Naive thymus-derived CD8-positive, alpha-beta T cell (primary cell): ENCODE measurements at regions of chr6 and their contacts with region 1.

Region 1: GRCh38 chr6:139375232-139376016 is 976 bp upstream of the CITED2 start:
- DNase-seq: peak in 9 of 10 donors; percentile 69 to 92 (median 83)
- ATAC-seq: peak; percentile 62 to 73
- H3K4me3 Mint-ChIP-seq: peak overlapping the region; percentile 91 to 100 (median 100)
- H3K27ac Mint-ChIP-seq: peak overlapping the region; percentile 93 to 100 (median 99)
- H3K4me1 Mint-ChIP-seq: peaks cover 15 to 39% (median 28%) of the 10 kb centered on the region in 4 donors
- H3K27me3 Mint-ChIP-seq: no peaks in the 10 kb centered on the region

Region 2: DNA sequence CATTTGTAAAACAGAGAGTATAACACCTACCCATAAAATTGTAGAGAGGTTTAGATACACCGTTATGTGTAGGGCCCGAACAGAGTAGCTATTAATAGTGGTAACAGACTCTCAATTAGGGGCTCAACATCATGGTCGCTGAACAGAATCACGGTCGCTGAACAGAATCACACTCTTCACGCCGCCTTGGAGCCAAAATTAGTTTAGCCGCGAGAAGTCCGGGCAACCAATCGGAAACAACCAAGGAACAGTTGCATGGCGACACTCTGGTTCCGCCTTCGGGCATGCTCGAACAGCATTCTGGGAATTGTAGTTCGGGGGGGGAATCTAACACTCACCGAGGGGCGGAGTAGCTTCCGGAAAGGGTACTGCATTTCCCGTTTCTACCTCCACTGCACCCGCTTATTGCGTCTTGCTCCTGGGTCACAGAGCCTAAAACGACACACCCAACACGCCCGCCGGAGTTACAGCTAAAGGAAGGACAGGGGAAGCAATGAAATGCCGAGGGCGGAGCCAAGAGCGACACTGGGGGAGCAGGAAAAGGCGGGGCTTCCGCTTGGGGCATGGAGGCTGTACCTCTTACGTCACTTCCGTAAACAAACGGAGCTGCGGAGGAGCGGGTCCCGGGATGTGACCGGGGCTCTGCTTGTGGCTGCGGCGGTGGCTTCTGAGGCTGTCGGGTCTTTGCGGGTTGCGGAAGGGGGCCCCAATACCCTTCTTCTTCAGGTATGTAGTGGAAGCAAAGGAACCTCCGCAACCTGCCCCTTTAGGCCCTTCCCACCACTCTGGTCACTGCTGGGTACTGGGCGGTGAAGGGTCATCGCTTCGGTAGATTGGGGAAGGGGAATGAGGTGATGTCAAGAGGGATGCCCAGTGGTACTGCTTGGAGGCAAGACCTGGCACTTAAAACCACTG is 602.0 kb before region 1 on chr6 and contains the start of gene CCDC28A:
- POLR2A ChIA-PET with region 1: interaction called, 45 read pairs
- DNase-seq: peak; percentile 80 to 99 (median 95)
- ATAC-seq: peak; percentile 85 to 86
- H3K4me3 Mint-ChIP-seq: peak within 1 kb of the TSS; percentile 91 to 100 (median 99)
- H3K27ac Mint-ChIP-seq: peak within 1 kb of the TSS; percentile 97 to 100 (median 100)
- H3K4me1 Mint-ChIP-seq: peaks cover 8 to 36% (median 27%) of the 10 kb centered on the region in 4 donors
- H3K27me3 Mint-ChIP-seq: peaks cover 0 to 1% (median 0%) of the 10 kb centered on the region in 5 donors
- polyA plus RNA-seq, gene CCDC28A: 51.3 to 68.2 (median 51.8) TPM

Region 3: GRCh38 chr6:139109558-139109957 is 265.9 kb before region 1 on chr6:
- POLR2A ChIA-PET with region 1: interaction called, 49 read pairs
- DNase-seq: peak in 4 of 10 donors; percentile 19 to 38 (median 34)
- ATAC-seq: no peak
- H3K4me3 Mint-ChIP-seq: peak overlapping the region in 2 of 10 donors; percentile 22 to 30
- H3K27ac Mint-ChIP-seq: peak overlapping the region in 8 of 10 donors; percentile 60 to 96 (median 81)
- H3K4me1 Mint-ChIP-seq: peaks cover 21 to 71% (median 55%) of the 10 kb centered on the region in 4 donors
- H3K27me3 Mint-ChIP-seq: no peaks in the 10 kb centered on the region

Region 4: GRCh38 chr6:139134817-139135581 is 240.4 kb before region 1 on chr6 and contains the start of gene HECA:
- POLR2A ChIA-PET with region 1: interaction called, 55 read pairs
- DNase-seq: peak; percentile 99 to 100 (median 100)
- ATAC-seq: peak; percentile 62 to 78
- H3K4me3 Mint-ChIP-seq: peak within 1 kb of the TSS; percentile 86 to 100 (median 96)
- H3K27ac Mint-ChIP-seq: peak within 1 kb of the TSS; percentile 95 to 100 (median 99)
- H3K4me1 Mint-ChIP-seq: peaks cover 39 to 81% (median 68%) of the 10 kb centered on the region in 4 donors
- H3K27me3 Mint-ChIP-seq: peaks cover 0 to 3% (median 0%) of the 10 kb centered on the region in 5 donors
- polyA plus RNA-seq, gene HECA: 4.6 to 8.5 (median 5.5) TPM

Region 5: DNA sequence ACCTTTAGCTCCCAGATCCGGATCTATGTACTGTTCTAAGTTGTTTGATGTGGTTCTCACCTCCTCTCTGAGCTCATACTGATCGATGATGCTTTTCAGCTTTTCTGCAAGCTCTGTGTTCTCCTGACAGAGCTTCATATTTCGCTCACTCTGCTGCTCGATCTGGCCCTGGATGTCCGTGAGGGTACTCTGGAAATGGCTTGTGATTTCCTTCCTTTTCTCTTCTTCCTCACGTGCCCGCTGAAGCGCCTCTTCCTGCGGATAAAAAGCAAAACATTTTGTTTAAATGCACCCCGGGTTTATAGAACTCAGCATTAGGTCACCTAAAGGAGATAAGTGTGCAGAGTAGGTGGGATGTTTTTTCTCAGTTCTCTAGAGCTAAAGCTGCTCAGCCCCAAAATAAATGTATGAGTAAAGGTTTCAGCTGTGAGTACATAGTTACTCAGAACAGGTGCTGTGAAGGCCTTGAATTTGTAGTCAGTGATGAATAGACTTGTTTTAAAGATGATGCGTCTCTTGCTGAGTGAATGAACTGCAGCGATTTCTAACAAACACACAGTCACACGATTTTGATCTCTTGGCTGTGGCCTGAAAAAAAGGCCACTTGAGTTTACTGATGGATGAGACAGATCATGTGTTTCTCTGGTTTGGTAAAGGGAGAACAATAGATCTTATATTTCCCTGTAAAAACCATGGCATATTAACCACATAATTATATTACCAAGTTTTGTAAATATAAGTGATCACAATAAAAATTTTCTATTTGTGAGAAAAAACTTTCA is 112.7 kb before region 1 on chr6:
- POLR2A ChIA-PET with region 1: no interaction called
- DNase-seq: peak in 4 of 10 donors; percentile 10 to 41 (median 34)
- ATAC-seq: peak; percentile 92 to 95
- H3K4me3 Mint-ChIP-seq: peak overlapping the region; percentile 63 to 83 (median 72)
- H3K27ac Mint-ChIP-seq: peak overlapping the region; percentile 58 to 88 (median 79)
- H3K4me1 Mint-ChIP-seq: peaks cover 11 to 23% (median 16%) of the 10 kb centered on the region in 4 donors
- H3K27me3 Mint-ChIP-seq: no peaks in the 10 kb centered on the region

Region 6: GRCh38 chr6:139291813-139292619 is 83.4 kb before region 1 on chr6 and contains the start of gene TXLNB:
- POLR2A ChIA-PET with region 1: interaction called, 60 read pairs
- DNase-seq: peak; percentile 48 to 92 (median 79)
- ATAC-seq: peak; percentile 88 to 89
- H3K4me3 Mint-ChIP-seq: peak within 1 kb of the TSS; percentile 69 to 91 (median 85)
- H3K27ac Mint-ChIP-seq: peak within 1 kb of the TSS; percentile 94 to 99 (median 97)
- H3K4me1 Mint-ChIP-seq: peaks cover 30 to 80% (median 66%) of the 10 kb centered on the region in 4 donors
- H3K27me3 Mint-ChIP-seq: peaks cover 0 to 1% (median 0%) of the 10 kb centered on the region in 5 donors
- polyA plus RNA-seq, gene TXLNB: 0.11 to 0.65 TPM in 2 of 3 donors, not detected in the other

Region 7: GRCh38 chr6:139386404-139386803 is 11.0 kb after region 1 on chr6:
- POLR2A ChIA-PET with region 1: interaction called, 24 read pairs
- DNase-seq: no peak
- ATAC-seq: no peak
- H3K4me3 Mint-ChIP-seq: no peak overlapping the region
- H3K27ac Mint-ChIP-seq: no peak overlapping the region
- H3K4me1 Mint-ChIP-seq: no peaks in the 10 kb centered on the region
- H3K27me3 Mint-ChIP-seq: peaks cover 0 to 2% (median 0%) of the 10 kb centered on the region in 5 donors